ENCODE measurements at regions of chr2 and their contacts with region 1.

Region 1: DNA sequence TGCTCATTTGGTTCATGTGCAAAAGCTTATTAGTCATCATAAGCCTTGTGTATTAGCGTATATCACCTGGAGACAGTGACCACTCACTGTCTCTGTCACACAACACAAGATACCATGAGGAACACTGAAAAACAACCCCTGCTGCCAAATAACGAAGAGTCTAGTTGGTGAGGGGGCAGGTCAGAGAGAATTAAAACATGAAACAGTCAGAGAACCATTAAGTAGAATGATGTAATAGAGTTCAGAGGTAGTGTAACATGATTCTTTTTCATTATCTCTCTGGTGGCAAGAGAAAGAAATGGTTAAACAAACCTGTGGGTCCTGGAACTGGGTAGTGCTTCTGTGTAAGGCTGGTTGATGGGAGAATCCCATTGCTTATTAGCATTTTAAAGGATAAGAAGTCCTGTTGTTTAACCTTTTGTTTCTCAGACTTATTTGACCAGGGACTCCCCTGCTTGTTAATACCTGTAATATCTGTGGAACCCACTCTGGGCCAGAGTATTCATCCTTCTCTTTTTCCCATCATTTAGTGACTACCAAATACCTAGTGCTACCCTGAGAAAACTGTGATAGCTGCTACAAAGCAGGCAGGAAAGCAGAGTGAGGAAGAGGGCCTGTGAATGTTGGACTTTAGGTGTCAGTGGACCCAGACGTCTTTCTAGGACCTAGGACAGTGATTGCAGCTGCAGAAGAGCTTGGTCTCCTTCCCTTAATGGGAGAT is 38.0 kb downstream of the PTRHD1 start:
- DNase-seq: peak; percentile 30
- H3K4me3 ChIP-seq: no peak overlapping the region
- H3K27ac ChIP-seq: no peak overlapping the region
- H3K4me1 ChIP-seq: no peaks in the 10 kb centered on the region
- H3K27me3 ChIP-seq: no peaks in the 10 kb centered on the region
- CTCF ChIP-seq: no peak

Region 2: DNA sequence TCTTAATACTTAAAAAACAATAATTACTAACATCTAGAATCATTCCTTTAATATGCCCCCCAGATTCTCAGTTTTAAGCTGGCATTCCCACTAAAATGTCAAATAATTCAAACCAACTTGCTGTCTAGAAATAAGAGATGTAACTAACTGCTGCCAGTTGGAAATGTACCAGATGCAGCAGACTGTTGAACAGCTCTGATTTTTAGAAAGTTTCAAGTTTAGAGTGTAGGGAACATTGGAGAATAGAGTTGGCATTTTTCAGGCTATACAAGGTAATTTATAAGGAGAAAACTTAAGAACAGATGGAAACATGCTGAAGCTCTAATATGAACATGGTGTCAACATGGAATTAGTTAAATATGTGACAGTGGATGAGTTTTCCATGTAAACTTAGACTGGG is 63.3 kb before region 1 on chr2:
- CTCF ChIA-PET with region 1: no interaction called
- dilution Hi-C with region 1: no loop called
- in situ Hi-C with region 1: no loop called
- intact Hi-C with region 1: loop called (anchors 10 kb)
- DNase-seq: no peak
- H3K4me3 ChIP-seq: no peak overlapping the region
- H3K27ac ChIP-seq: no peak overlapping the region
- H3K4me1 ChIP-seq: no peaks in the 10 kb centered on the region
- H3K27me3 ChIP-seq: no peaks in the 10 kb centered on the region
- CTCF ChIP-seq: no peak

Region 3: GRCh38 chr2:24827321-24828237 is 72.4 kb after region 1 on chr2:
- CTCF ChIA-PET with region 1: no interaction called
- dilution Hi-C with region 1: no loop called
- in situ Hi-C with region 1: no loop called
- intact Hi-C with region 1: no loop called
- DNase-seq: peak; percentile 54
- H3K4me3 ChIP-seq: no peak overlapping the region
- H3K27ac ChIP-seq: no peak overlapping the region
- H3K4me1 ChIP-seq: no peaks in the 10 kb centered on the region
- H3K27me3 ChIP-seq: no peaks in the 10 kb centered on the region
- CTCF ChIP-seq: peak; percentile 88 to 90